Activated B cell treated with CpG ODN at 0.5 μM for 24 hours (primary cell): ENCODE measurements at regions of chr19 and their contacts with region 1.

Region 1: GRCh38 chr19:55258828-55259539 is at the start of gene PPP6R1:
- DNase-seq: peak; percentile 94
- ATAC-seq: peak; percentile 75
- H3K4me3 Mint-ChIP-seq: peak within 1 kb of the TSS; percentile 98
- H3K27ac Mint-ChIP-seq: peak within 1 kb of the TSS; percentile 100
- H3K4me1 Mint-ChIP-seq: peaks cover 52% of the 10 kb centered on the region
- H3K27me3 Mint-ChIP-seq: no peaks in the 10 kb centered on the region
- CTCF ChIP-seq: no peak
- total RNA-seq, gene PPP6R1: 203 and 220 TPM in 2 replicates

Region 2: GRCh38 chr19:55117636-55118391 is 141.2 kb before region 1 on chr19 and contains the start of gene PPP1R12C:
- CTCF ChIA-PET with region 1: no interaction called
- POLR2A ChIA-PET with region 1: interaction called, 13 read pairs
- intact Hi-C with region 1: loop called (anchors 1 kb)
- DNase-seq: peak; percentile 96
- ATAC-seq: peak; percentile 93
- H3K4me3 Mint-ChIP-seq: peak within 1 kb of the TSS; percentile 97
- H3K27ac Mint-ChIP-seq: peak within 1 kb of the TSS; percentile 87
- H3K4me1 Mint-ChIP-seq: peaks cover 55% of the 10 kb centered on the region
- H3K27me3 Mint-ChIP-seq: no peaks in the 10 kb centered on the region
- CTCF ChIP-seq: no peak
- total RNA-seq, gene PPP1R12C: 115 and 139 TPM in 2 replicates

Region 3: DNA sequence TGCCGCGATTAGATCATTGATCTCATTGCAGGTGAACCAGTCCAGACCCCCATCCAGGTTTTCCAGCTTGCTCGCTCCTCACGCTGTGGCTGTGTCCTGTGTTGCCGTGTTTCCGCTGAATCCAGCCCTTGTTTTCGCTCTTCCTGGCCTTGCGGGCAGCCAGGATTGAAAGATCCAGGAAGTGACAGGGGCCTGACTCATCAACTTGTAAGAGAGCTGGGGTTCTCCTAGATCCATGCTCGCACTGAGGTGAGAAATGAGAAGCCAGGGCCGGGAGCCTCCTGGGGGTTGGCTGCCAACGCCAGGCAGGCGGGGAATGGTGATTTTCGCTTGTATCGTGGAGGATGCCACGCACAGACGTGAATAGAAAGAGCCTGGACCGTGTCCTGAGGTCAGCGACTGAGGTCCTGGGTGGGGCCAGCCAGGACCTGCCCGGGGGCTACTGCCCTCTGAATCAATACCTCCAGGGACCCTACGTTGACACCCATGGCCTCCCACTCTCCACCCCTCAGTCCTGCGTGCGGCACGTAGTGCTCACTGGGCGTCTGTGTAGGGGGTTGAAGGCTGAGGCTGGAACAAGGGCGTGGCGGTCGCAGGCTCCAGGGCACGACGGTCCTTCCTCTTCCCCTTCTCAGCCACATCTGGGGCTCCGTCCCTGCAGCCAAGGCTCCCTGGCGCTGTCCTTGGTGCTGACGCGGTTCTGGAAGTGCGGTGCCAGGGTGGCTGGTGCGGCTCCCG is 42.4 kb before region 1 on chr19:
- CTCF ChIA-PET with region 1: no interaction called
- POLR2A ChIA-PET with region 1: no interaction called
- intact Hi-C with region 1: loop called (anchors 5 kb)
- DNase-seq: peak; percentile 35
- ATAC-seq: peak; percentile 72
- H3K4me3 Mint-ChIP-seq: no peak overlapping the region
- H3K27ac Mint-ChIP-seq: no peak overlapping the region
- H3K4me1 Mint-ChIP-seq: peaks cover 11% of the 10 kb centered on the region
- H3K27me3 Mint-ChIP-seq: peaks cover 16% of the 10 kb centered on the region
- CTCF ChIP-seq: no peak

Region 4: DNA sequence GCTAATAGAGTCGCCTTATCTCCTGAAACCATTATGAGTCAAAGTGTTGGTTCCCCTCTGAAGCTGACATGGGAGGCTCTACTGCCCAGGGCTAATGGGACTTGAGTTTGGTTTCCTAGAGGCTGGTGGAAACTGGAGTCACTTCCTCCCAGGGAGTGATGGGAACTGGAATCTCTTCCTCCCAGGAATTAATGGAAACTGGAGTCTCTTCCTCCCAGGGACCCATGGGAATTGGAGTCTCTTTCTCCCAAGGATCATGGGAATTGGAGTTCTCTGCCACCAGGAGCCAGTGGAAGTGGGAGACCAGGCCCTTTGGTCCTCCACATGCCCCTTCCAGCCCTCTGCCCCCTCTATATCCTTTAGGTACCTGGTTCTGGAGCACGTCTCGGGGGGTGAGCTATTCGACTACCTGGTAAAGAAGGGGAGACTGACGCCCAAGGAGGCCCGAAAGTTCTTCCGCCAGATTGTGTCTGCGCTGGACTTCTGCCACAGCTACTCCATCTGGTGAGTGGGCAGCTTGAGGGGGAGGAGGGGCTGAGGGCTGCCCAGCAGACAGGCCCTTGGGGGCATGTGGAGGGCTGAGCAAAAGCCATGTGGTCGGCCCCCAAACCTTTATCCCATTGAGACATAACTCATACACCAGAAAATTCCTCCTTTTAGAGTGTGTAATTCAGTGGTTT is 30.3 kb after region 1 on chr19:
- CTCF ChIA-PET with region 1: interaction called, 16 read pairs
- POLR2A ChIA-PET with region 1: interaction called, 13 read pairs
- intact Hi-C with region 1: no loop called
- DNase-seq: no peak
- ATAC-seq: no peak
- H3K4me3 Mint-ChIP-seq: no peak overlapping the region
- H3K27ac Mint-ChIP-seq: no peak overlapping the region
- H3K4me1 Mint-ChIP-seq: peaks cover 4% of the 10 kb centered on the region
- H3K27me3 Mint-ChIP-seq: no peaks in the 10 kb centered on the region
- CTCF ChIP-seq: no peak

Region 5: GRCh38 chr19:55339048-55339888 is 80.3 kb after region 1 on chr19 and contains the start of gene KMT5C:
- CTCF ChIA-PET with region 1: interaction called, 6 read pairs
- POLR2A ChIA-PET with region 1: interaction called, 18 read pairs
- intact Hi-C with region 1: loop called (anchors 1 kb)
- DNase-seq: peak; percentile 99
- ATAC-seq: peak; percentile 81
- H3K4me3 Mint-ChIP-seq: peak within 1 kb of the TSS; percentile 95
- H3K27ac Mint-ChIP-seq: peak within 1 kb of the TSS; percentile 90
- H3K4me1 Mint-ChIP-seq: peaks cover 31% of the 10 kb centered on the region
- H3K27me3 Mint-ChIP-seq: peaks cover 7% of the 10 kb centered on the region
- CTCF ChIP-seq: no peak
- total RNA-seq, gene KMT5C: 7.2 and 8.1 TPM in 2 replicates

Region 6: GRCh38 chr19:55407800-55408532 is 149.0 kb after region 1 on chr19:
- CTCF ChIA-PET with region 1: no interaction called
- POLR2A ChIA-PET with region 1: interaction called, 16 read pairs
- intact Hi-C with region 1: loop called (anchors 1 kb)
- DNase-seq: peak; percentile 95
- ATAC-seq: peak; percentile 88
- H3K4me3 Mint-ChIP-seq: peak overlapping the region; percentile 91
- H3K27ac Mint-ChIP-seq: peak overlapping the region; percentile 98
- H3K4me1 Mint-ChIP-seq: peaks cover 24% of the 10 kb centered on the region
- H3K27me3 Mint-ChIP-seq: no peaks in the 10 kb centered on the region
- CTCF ChIP-seq: no peak